ENCODE measurements at regions of chr7 and their contacts with region 1.

Region 1: GRCh38 chr7:27808626-27809025 is 68.7 kb downstream of the TAX1BP1 start:
- DNase-seq: no peak
- ATAC-seq: no peak
- H3K4me3 ChIP-seq: no peak overlapping the region
- H3K4me3 Mint-ChIP-seq: no peak overlapping the region
- H3K27ac ChIP-seq: no peak overlapping the region
- H3K27ac Mint-ChIP-seq: no peak overlapping the region
- H3K4me1 ChIP-seq: no peaks in the 10 kb centered on the region
- H3K4me1 Mint-ChIP-seq: peaks cover 12 to 17% (median 15%) of the 10 kb centered on the region in 3 donors
- H3K27me3 ChIP-seq: no peaks in the 10 kb centered on the region
- H3K27me3 Mint-ChIP-seq: no peaks in the 10 kb centered on the region

Region 2: DNA sequence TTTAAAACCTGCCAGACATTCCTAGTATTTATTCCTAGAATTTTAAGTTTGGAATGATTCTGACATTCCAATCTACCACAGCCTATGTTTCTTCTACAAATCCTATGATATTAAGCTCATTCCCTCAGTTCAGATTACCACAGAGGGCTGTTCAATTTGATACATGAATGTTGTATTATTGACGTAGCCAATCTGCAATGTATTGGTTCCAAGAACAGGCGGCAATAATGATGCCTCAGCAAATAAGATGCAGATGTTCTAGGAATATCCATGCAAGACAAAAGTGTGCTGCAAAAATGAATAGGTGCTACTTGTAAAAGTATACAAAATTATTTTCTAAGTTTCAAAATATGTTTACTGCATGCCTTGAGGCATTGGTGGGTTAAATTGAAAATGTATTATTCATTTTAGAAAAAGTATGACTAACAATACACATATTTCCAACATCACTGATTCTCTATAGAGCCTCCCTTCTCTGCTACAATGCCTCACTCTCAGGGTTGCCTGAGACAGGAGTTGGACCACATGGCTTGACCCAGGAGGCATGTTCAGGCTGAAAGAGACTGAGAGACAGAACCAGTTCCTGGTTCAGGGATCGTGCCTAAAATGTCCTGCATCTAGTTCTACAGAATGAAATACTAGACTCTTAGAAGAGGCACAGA is 509.6 kb after region 1 on chr7:
- CTCF ChIA-PET with region 1: interaction called in 1 of 2 experiments, 10 read pairs
- POLR2A ChIA-PET with region 1: no interaction called
- DNase-seq: no peak
- ATAC-seq: no peak
- H3K4me3 ChIP-seq: no peak overlapping the region
- H3K4me3 Mint-ChIP-seq: no peak overlapping the region
- H3K27ac ChIP-seq: no peak overlapping the region
- H3K27ac Mint-ChIP-seq: no peak overlapping the region
- H3K4me1 ChIP-seq: no peaks in the 10 kb centered on the region
- H3K4me1 Mint-ChIP-seq: no peaks in the 10 kb centered on the region
- H3K27me3 ChIP-seq: peaks cover 0 to 12% of the 10 kb centered on the region in 2 experiments
- H3K27me3 Mint-ChIP-seq: peaks cover 14% of the 10 kb centered on the region in 2 donors

Measured in T-cell (primary cell).